ENCODE measurements at regions of chr14 and their contacts with region 1.

Region 1: GRCh38 chr14:63044994-63045611 is at the start of gene KCNH5:
- DNase-seq: peak; percentile 48
- H3K4me3 Mint-ChIP-seq: peak within 1 kb of the TSS; percentile 66
- H3K27ac Mint-ChIP-seq: peak within 1 kb of the TSS; percentile 58
- H3K4me1 Mint-ChIP-seq: peaks cover 11% of the 10 kb centered on the region
- H3K27me3 Mint-ChIP-seq: peaks cover 71% of the 10 kb centered on the region
- CTCF ChIP-seq: no peak
- total RNA-seq, gene KCNH5: not detected in 2 replicates

Region 2: GRCh38 chr14:62162998-62163589 is 882.0 kb before region 1 on chr14:
- CTCF ChIA-PET with region 1: no interaction called
- intact Hi-C with region 1: loop called (anchors 5 kb)
- DNase-seq: peak; percentile 23
- H3K4me3 Mint-ChIP-seq: no peak overlapping the region
- H3K27ac Mint-ChIP-seq: no peak overlapping the region
- H3K4me1 Mint-ChIP-seq: no peaks in the 10 kb centered on the region
- H3K27me3 Mint-ChIP-seq: peaks cover 52% of the 10 kb centered on the region
- CTCF ChIP-seq: peak; percentile 66

Region 3: GRCh38 chr14:62691613-62692487 is 353.3 kb before region 1 on chr14:
- CTCF ChIA-PET with region 1: no interaction called
- intact Hi-C with region 1: loop called (anchors 5 kb)
- DNase-seq: peak; percentile 70
- H3K4me3 Mint-ChIP-seq: peak overlapping the region; percentile 42
- H3K27ac Mint-ChIP-seq: peak overlapping the region; percentile 98
- H3K4me1 Mint-ChIP-seq: peaks cover 62% of the 10 kb centered on the region
- H3K27me3 Mint-ChIP-seq: no peaks in the 10 kb centered on the region
- CTCF ChIP-seq: no peak

Region 4: GRCh38 chr14:63266106-63266505 is 221.0 kb after region 1 on chr14:
- CTCF ChIA-PET with region 1: no interaction called
- intact Hi-C with region 1: no loop called
- DNase-seq: no peak
- H3K4me3 Mint-ChIP-seq: no peak overlapping the region
- H3K27ac Mint-ChIP-seq: no peak overlapping the region
- H3K4me1 Mint-ChIP-seq: no peaks in the 10 kb centered on the region
- H3K27me3 Mint-ChIP-seq: peaks cover 15% of the 10 kb centered on the region
- CTCF ChIP-seq: no peak

Region 5: DNA sequence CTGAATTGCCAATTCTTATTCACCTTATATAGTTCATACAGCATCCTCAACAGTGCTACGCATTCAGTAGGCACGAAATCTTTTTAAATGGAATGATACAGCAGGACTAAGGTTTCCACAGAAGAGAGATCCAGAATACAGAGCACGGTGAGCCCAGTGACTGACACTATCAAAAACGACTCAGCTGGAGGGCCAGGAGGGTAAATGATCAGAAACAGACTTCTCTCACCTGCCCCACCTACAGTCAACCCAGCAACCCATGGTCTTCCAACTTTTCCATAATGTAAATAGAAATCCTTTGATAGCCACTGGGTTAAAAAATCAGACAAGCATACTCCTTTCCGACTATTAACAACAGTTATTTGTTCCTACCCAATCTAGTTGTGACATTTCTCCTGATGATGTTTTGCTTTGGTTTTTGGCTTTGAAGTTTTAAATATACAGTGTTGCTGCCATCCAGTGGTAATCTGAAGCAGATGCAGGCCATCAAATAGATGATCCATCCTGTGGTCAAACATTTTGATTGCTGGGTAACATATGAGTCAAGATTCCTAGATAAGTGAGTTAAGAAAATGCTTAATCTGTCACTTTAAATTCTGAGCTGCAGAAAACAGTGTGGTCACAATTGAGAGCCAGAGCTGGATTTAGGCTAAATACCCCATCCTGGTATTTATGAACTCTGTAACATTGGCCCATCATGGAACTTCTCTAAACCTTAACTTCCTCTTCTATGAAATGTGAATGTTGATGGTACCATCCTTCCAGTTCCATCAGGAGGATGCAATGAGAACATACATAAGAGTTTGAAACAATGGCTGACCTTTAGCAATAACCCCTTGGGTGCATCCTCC is 231.6 kb after region 1 on chr14:
- CTCF ChIA-PET with region 1: no interaction called
- intact Hi-C with region 1: loop called (anchors 5 kb)
- DNase-seq: peak; percentile 12
- H3K4me3 Mint-ChIP-seq: no peak overlapping the region
- H3K27ac Mint-ChIP-seq: no peak overlapping the region
- H3K4me1 Mint-ChIP-seq: no peaks in the 10 kb centered on the region
- H3K27me3 Mint-ChIP-seq: no peaks in the 10 kb centered on the region
- CTCF ChIP-seq: peak; percentile 49

Region 6: DNA sequence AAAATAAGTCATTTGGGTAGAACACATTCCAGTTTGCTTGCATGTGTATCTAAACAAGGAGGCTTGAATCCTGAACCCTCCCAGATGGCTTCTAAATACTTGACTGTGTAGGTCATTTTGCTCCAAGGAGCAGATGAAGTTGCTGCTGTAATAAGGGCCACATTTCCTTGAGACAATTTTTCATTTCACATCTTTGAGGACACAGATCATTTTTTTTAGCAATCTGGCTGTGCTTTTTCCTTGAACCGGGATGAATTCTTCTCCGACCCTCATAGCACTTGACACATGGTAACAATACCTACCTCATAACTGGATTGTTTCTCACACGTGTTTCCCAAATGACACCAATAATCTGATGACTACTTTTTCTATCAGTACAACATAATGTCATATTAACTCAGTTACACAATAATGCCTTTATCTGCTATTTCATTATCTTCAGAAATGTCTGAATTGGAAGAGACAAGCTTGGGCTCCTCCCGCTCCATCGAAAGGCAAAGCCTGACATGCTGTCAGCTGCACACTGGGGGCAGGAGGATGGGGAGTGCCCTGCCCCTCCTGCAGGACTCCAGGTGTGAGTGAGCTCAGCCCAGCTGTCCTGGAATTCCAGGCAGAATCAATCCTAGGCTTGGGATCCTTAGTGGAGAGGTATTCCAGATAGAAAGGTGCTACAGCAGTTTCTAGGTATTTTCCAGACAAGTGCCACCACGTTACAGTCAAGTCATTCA is 242.8 kb after region 1 on chr14:
- CTCF ChIA-PET with region 1: no interaction called
- intact Hi-C with region 1: no loop called
- DNase-seq: no peak
- H3K4me3 Mint-ChIP-seq: no peak overlapping the region
- H3K27ac Mint-ChIP-seq: no peak overlapping the region
- H3K4me1 Mint-ChIP-seq: no peaks in the 10 kb centered on the region
- H3K27me3 Mint-ChIP-seq: no peaks in the 10 kb centered on the region
- CTCF ChIP-seq: no peak

Measured in Calu3 (cell line).